K562 (cell line): ENCODE measurements at regions of chr1 and their contacts with region 1.

Region 1: DNA sequence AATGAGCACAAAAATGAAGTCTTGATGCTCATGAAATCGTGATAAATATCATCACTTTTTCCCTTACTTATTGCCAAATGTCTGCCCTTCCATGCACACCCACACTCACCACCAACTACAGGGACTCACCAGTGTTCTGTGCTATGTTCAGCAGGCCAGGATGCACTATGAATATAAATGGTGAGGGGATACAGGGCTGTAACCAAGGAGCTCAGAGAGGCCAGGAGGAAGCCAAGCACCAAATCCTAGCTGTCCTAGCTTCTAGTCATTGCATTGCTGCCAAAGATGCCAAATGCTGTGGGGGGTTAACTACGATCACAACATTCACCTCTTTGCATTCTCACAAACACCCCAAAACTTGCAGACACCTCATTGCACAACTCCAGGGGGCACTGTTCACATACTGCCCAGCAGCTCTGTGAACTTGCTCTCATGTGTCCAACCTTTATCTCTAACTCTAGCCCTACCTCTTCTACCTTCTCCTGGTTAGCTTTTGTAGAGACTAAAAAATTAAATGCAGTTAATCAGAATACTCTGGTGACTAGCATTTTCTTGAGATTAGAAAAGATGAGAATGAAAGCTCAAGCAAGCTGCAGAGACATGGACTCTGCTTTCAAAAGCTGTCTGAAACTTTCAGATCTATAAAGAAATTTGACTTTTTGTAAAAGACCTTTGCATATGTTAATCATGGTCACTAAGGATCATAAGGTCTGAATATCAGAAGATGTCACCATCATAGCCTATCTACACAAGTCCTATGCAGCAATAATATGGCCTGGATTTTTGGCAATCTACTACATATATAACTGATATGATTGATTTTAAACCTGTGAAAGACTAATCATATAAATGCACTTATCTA is 13.9 kb upstream of the KIF14 start:
- DNase-seq: no peak
- ATAC-seq: no peak
- H3K4me3 ChIP-seq: no peak overlapping the region
- H3K27ac ChIP-seq: no peak overlapping the region
- H3K4me1 ChIP-seq: peaks cover 14% of the 10 kb centered on the region in 2 experiments
- H3K27me3 ChIP-seq: no peaks in the 10 kb centered on the region
- CTCF ChIP-seq: peak; percentile 44 to 58 (median 55)
- EP300 ChIP-seq: no peak
- POLR2A ChIP-seq: no peak
- RAD21 ChIP-seq: peak in 1 of 2 experiments; percentile 63; a peak in 2 of 4 replicates

Region 2: GRCh38 chr1:200802865-200803512 is 168.5 kb after region 1 on chr1:
- CTCF ChIA-PET with region 1: interaction called, 4 read pairs
- POLR2A ChIA-PET with region 1: no interaction called
- in situ Hi-C with region 1: no loop called
- intact Hi-C with region 1: loop called (anchors 1 kb)
- DNase-seq: peak; percentile 71 to 88 (median 74)
- ATAC-seq: peak; percentile 99
- H3K4me3 ChIP-seq: no peak overlapping the region
- H3K27ac ChIP-seq: no peak overlapping the region
- H3K4me1 ChIP-seq: no peaks in the 10 kb centered on the region
- H3K27me3 ChIP-seq: no peaks in the 10 kb centered on the region
- CTCF ChIP-seq: peak; percentile 94 to 96 (median 95)
- EP300 ChIP-seq: no peak
- POLR2A ChIP-seq: no peak
- RAD21 ChIP-seq: peak; percentile 98 to 99